Activated CD4-positive, alpha-beta memory T cell treated with anti-CD3 and anti-CD28 coated beads for 36 hours (primary cell): ENCODE measurements at regions of chr15 and their contacts with region 1.

Region 1: DNA sequence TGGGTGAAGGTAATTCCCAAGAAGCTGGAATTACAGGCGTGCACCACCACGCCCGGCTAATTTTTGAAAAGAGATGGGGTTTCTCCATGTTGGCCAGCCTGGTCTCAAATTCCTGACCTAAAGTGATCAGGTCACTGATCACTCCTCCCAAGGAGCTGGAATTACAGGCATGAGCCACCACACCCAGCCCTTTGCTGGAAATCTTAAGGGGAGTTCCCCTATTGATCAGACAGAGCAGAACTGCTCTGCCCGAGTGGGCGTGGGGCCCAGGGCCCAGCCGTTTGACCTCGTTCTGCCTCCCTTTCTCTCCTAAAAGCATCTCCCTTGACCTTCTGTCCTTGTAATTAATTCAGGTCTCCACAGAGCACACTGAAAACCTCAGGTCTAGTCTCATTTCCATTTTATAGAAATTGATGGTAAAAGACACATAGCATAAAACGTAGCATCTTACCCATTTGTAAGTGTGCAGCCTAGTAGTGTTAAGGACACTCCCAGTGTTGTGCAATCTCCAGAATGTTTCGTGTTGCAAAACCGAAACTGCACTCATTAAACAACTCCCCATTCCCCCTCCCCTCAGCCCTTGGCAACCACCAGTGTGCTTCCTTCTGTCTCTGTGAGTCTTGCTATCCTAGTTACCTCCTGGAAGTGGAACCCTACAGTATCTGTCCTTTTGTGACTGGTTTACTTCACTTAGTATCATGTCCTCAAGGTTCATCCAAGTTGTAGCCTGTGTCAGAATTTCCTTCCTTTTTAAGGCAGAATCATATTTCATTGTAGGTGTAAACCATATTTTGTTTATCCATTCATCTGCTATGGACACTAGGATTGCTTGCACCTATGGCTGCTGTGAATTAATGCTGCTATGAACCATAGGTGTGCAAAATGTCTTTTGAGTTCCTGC is 89.4 kb downstream of the SLCO3A1 start:
- DNase-seq: peak; percentile 68
- H3K4me3 Mint-ChIP-seq: peak overlapping the region; percentile 30
- H3K27ac Mint-ChIP-seq: peak overlapping the region; percentile 21
- H3K4me1 Mint-ChIP-seq: peaks cover 57% of the 10 kb centered on the region
- H3K27me3 Mint-ChIP-seq: no peaks in the 10 kb centered on the region

Region 2: DNA sequence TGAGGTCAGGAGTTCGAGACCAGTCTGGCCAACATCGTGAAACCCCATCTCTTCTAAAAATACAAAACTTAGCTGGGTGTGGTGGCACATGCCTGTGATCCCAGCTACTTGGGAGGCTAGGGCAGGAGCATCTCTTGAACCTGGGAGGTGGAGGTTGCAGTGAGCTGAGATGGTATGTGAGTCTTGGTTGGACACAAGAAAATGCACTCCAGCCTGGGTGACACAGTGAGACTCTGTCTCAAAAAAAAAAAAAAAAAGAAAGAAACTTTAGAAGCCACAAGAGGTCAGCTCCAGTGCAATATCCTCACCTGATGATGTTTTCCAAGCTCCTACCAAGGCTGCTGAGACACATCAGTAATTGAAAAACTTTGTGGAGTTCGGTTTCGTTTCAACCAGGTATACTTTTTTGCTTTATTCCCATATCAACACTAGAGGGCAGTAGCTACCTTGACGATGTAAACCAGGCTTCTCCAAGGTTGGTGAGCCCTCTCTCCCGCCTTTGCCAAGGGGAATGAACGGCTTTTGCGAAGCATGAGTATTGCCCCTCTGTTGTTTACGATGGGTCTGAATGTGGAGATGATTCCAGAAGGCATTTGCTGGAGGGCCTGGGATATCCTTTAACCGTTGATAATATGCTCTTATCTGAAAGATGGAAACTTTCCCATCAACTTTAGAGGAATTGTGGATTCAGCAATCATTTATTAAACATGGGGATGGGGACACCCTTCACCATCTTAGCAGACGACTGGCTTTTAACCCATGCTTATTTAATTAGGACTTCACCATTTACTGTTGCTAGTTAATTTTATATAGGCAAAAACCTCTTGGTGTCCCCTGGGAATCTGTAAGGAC is 640.1 kb before region 1 on chr15:
- CTCF ChIA-PET with region 1: interaction called, 10 read pairs
- POLR2A ChIA-PET with region 1: no interaction called
- intact Hi-C with region 1: no loop called
- DNase-seq: peak; percentile 28
- H3K4me3 Mint-ChIP-seq: no peak overlapping the region
- H3K27ac Mint-ChIP-seq: no peak overlapping the region
- H3K4me1 Mint-ChIP-seq: peaks cover 21% of the 10 kb centered on the region
- H3K27me3 Mint-ChIP-seq: peaks cover 10% of the 10 kb centered on the region

Region 3: DNA sequence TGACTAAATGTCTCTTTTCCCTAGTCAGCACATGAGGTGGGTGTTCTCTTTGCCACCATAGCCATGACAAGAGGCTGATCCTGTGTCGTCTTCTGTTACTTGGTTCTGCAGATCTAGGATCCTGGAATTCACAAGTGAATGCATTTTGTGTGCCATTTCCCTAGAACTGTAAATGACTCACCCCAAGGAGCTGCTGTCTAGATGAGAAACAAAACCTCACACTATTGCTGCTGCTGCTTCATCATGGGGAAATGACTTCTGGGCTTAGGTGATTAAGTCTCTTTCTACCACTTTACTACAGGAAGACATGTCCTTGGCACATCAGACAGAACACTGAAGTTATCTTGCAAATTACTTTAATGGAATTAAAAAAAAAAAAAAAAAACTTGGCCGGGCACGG is 34.5 kb before region 1 on chr15:
- CTCF ChIA-PET with region 1: no interaction called
- POLR2A ChIA-PET with region 1: no interaction called
- intact Hi-C with region 1: loop called (anchors 5 kb)
- DNase-seq: peak; percentile 16
- H3K4me3 Mint-ChIP-seq: no peak overlapping the region
- H3K27ac Mint-ChIP-seq: peak overlapping the region; percentile 59
- H3K4me1 Mint-ChIP-seq: peaks cover 58% of the 10 kb centered on the region
- H3K27me3 Mint-ChIP-seq: no peaks in the 10 kb centered on the region

Region 4: DNA sequence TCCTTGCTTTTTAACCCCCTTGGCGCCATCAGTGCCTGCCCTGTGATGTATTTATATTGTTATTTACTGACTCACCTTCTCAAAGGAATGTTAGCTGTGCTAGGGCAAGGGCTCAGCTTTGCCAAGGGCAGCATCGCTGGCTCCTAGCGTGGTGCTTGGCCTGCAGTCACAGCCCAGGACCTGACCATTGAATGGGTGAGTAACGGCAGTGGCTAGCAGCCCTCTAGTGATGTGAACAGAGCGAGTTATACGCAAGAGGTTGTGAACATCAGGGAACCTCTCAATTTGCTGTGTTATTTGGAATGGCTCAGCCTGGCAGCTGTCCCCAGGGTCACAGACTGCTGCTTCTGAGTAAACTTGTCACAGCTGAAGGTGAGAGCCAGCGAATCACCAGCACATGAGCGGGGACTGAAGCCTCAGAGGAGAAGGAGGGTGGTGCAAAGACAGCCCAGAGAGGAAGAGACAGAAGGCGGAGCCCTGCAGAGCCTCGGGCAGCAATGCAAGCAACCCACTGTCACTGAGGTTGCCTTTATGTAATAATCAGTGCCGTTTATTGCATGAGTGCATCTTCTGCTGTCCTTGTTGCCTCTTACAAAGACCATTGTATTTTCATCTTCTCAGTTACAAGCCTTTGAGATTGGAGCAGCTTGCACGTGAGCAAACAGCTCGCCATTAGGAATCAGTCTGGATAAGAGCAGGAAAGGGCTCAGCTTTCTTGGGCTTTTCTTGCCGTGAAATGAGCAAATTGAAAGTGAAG is 68.9 kb after region 1 on chr15:
- CTCF ChIA-PET with region 1: no interaction called
- POLR2A ChIA-PET with region 1: no interaction called
- intact Hi-C with region 1: loop called (anchors 1 kb)
- DNase-seq: peak; percentile 67
- H3K4me3 Mint-ChIP-seq: peak overlapping the region; percentile 39
- H3K27ac Mint-ChIP-seq: peak overlapping the region; percentile 66
- H3K4me1 Mint-ChIP-seq: peaks cover 71% of the 10 kb centered on the region
- H3K27me3 Mint-ChIP-seq: no peaks in the 10 kb centered on the region

Region 5: DNA sequence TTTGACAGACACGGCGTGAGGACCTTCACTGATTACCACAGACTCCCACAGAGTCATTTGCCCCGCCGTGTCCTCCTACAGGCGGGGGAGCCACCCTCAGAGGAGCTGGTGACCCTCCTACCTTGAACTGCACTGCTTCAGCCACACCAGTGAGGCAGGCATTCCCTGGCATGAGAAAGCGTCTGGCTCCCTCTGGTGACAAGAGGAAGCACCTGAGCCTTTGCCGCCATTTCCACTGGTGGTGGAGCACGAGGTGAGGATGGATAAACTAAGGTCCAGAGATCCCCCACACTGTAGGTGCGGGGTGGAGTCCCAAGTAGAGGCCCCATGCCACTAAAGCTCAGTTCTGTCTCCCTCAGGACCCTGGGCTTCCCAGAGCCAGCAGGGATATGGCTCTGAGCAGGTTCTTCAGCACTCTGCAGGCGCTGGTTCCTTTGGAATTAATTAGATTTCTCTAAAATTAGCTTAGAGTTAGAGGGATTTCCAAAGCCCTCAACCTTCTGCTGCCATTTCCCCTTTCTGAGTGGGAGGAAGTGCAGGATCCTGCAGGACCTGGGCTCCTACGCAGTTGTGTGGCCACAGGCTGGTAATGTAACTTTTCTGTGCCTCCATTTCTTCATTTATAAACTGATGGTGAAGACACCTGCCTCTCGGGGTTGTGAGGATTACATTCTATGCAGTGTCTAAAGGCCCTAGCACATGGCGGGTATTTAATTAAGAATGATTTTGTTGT is 134.6 kb after region 1 on chr15:
- CTCF ChIA-PET with region 1: no interaction called
- POLR2A ChIA-PET with region 1: no interaction called
- intact Hi-C with region 1: loop called (anchors 5 kb)
- DNase-seq: peak; percentile 84
- H3K4me3 Mint-ChIP-seq: no peak overlapping the region
- H3K27ac Mint-ChIP-seq: no peak overlapping the region
- H3K4me1 Mint-ChIP-seq: peaks cover 34% of the 10 kb centered on the region
- H3K27me3 Mint-ChIP-seq: no peaks in the 10 kb centered on the region